Transverse colon (tissue), 4 donors: ENCODE measurements at regions of chr10 and their contacts with region 1.

Region 1: GRCh38 chr10:130471486-130471885 is 335.3 kb downstream of the GLRX3 start:
- DNase-seq: no peak
- H3K4me3 ChIP-seq: no peak overlapping the region
- H3K27ac ChIP-seq: no peak overlapping the region
- H3K4me1 ChIP-seq: no peaks in the 10 kb centered on the region
- H3K27me3 ChIP-seq: no peaks in the 10 kb centered on the region
- CTCF ChIP-seq: no peak
- EP300 ChIP-seq: no peak
- POLR2A ChIP-seq: no peak

Region 2: GRCh38 chr10:130422366-130423324 is 48.8 kb before region 1 on chr10:
- in situ Hi-C with region 1: no loop called
- intact Hi-C with region 1: no loop called
- DNase-seq: no peak
- H3K4me3 ChIP-seq: no peak overlapping the region
- H3K27ac ChIP-seq: no peak overlapping the region
- H3K4me1 ChIP-seq: no peaks in the 10 kb centered on the region
- H3K27me3 ChIP-seq: no peaks in the 10 kb centered on the region
- CTCF ChIP-seq: no peak
- EP300 ChIP-seq: no peak
- POLR2A ChIP-seq: no peak

Region 3: GRCh38 chr10:130453036-130453720 is 18.3 kb before region 1 on chr10:
- in situ Hi-C with region 1: no loop called
- intact Hi-C with region 1: loop called (anchors 1 kb)
- DNase-seq: no peak
- H3K4me3 ChIP-seq: no peak overlapping the region
- H3K27ac ChIP-seq: no peak overlapping the region
- H3K4me1 ChIP-seq: no peaks in the 10 kb centered on the region
- H3K27me3 ChIP-seq: no peaks in the 10 kb centered on the region
- CTCF ChIP-seq: no peak
- EP300 ChIP-seq: no peak
- POLR2A ChIP-seq: no peak